Colonic mucosa (tissue), 4 donors: ENCODE measurements at regions of chr14 and their contacts with region 1.

Region 1: GRCh38 chr14:39102969-39103957 is at the start of gene SEC23A:
- DNase-seq: peak; percentile 94
- H3K4me3 ChIP-seq: peak within 1 kb of the TSS; percentile 93
- H3K27ac ChIP-seq: peak within 1 kb of the TSS; percentile 100
- H3K4me1 ChIP-seq: peaks cover 8% of the 10 kb centered on the region
- H3K27me3 ChIP-seq: no peaks in the 10 kb centered on the region
- CTCF ChIP-seq: no peak
- total RNA-seq, gene SEC23A: 66.6 to 132 TPM

Region 2: GRCh38 chr14:39174560-39175444 is 71.5 kb after region 1 on chr14 and contains the start of gene PNN:
- intact Hi-C with region 1: loop called (anchors 5 kb)
- DNase-seq: peak; percentile 98
- H3K4me3 ChIP-seq: peak within 1 kb of the TSS; percentile 79
- H3K27ac ChIP-seq: peak within 1 kb of the TSS; percentile 92
- H3K4me1 ChIP-seq: no peaks in the 10 kb centered on the region
- H3K27me3 ChIP-seq: no peaks in the 10 kb centered on the region
- CTCF ChIP-seq: no peak
- total RNA-seq, gene PNN: 34.6 to 52.4 TPM

Region 3: DNA sequence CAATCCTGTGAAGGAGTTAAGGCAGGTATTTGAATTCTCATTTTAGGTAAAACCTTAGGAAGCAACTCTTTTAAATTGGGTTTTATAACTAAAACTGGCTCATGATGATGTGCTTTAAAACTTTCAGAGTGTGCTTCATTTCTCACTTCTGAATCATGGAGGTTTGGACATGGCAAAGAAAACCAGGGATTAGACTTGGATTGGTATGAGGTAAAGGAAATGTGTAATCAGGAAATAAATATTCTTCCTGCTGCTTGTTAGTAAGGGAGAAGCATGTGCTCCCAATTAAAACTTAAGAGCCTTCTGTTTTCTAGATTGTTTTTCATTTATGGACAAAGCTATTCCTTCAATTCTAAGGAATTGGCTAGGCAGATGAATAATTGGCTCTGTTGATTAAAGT is 271.6 kb after region 1 on chr14:
- intact Hi-C with region 1: loop called (anchors 5 kb)
- DNase-seq: no peak
- H3K4me3 ChIP-seq: no peak overlapping the region
- H3K27ac ChIP-seq: no peak overlapping the region
- H3K4me1 ChIP-seq: no peaks in the 10 kb centered on the region
- H3K27me3 ChIP-seq: no peaks in the 10 kb centered on the region
- CTCF ChIP-seq: no peak